Mucosa of descending colon (tissue), 3 donors: ENCODE measurements at regions of chr22 and their contacts with region 1.

Region 1: DNA sequence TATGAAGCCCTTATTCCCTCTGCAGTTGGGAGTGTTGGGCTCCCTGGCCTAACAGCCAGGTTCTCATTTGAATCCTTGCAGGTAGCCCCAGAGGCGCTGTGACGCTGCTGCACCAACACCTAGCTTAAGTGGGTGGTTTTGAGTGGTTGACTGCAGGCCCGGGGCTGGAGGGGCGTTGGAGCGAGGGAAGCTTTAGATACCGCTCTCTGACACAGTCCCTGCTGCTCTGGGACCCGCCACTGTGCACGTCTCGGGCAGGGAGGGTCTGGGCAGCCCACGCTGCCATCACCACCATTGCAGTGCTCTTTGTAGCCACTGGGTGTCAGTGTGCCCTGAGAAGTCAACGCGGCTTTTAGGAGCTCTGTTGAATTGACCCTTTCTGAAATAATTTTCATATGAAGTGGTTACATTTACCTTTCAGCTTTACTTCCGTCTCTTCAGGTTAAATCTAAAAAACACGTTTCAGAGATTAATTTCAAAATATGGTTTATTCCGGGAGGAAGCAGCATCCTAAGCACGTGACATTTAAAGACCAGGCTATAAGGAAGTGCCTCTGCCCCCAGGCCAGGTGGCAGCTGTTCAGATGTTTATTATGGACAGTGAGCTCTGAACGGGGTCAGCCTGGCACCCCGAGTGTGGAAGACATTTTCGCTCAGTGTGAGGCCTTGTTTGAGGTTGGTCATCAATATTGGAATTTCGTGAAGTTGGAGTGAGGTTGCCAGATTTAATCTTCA is 30.9 kb upstream of the PARVB start:
- DNase-seq: peak in 2 of 3 donors; percentile 61
- ATAC-seq: peak; percentile 81
- H3K4me3 ChIP-seq: no peak overlapping the region
- H3K4me1 ChIP-seq: no peaks in the 10 kb centered on the region
- CTCF ChIP-seq: peak; percentile 91

Region 2: GRCh38 chr22:44074337-44074984 is 81.3 kb after region 1 on chr22:
- intact Hi-C with region 1: loop called in 1 of 2 experiments (anchors 10 kb)
- DNase-seq: no peak
- ATAC-seq: no peak
- H3K4me3 ChIP-seq: no peak overlapping the region
- H3K4me1 ChIP-seq: no peaks in the 10 kb centered on the region
- CTCF ChIP-seq: no peak

Region 3: DNA sequence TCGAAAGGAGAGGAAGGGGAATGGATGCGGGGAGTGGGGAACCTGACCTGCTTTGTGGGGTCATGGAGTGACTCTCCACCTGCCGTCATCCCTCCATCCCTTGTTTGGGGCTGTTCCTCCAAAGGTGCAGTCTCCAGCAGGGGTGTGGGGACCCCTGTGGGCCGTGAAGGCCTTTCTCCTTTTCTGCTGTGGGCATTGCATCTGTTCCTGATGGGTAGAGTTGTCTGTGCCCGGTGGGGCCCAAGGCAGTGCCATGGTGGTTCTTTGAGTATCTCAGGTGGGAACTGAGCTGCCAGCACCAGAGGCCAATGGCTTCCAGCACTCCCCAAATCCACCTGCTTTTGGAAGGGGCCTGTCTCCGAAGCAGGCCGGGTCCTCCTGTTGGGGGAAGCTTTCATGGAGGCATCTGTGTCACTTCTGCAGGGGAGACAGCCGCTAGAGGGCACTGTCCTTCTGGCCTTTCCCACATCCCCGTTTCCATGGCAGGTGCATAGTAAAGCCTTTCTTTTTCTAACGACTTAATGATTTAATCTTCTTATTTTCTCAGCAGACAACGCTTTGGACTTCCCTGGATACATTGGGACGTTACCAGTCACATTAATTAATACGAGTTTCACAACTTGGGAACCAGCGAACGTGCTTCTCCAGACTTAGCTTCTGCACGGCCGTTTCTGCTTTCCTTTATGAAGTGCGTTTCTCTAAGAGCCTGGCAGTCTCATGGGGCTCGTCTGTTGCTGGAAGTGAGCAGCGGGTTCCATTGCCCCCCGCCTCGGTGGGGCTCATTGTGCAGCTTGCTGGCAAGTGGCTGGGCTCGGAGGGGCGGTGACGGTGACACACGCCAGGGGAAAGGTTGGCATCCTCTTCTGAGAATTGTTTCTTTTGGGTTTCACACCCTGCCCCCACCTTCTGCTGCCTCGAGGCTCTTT is 88.0 kb after region 1 on chr22:
- intact Hi-C with region 1: loop called (anchors 10 kb)
- DNase-seq: peak in 2 of 3 donors; percentile 71 to 92
- ATAC-seq: peak; percentile 61
- H3K4me3 ChIP-seq: no peak overlapping the region
- H3K4me1 ChIP-seq: no peaks in the 10 kb centered on the region
- CTCF ChIP-seq: peak; percentile 55

Region 4: DNA sequence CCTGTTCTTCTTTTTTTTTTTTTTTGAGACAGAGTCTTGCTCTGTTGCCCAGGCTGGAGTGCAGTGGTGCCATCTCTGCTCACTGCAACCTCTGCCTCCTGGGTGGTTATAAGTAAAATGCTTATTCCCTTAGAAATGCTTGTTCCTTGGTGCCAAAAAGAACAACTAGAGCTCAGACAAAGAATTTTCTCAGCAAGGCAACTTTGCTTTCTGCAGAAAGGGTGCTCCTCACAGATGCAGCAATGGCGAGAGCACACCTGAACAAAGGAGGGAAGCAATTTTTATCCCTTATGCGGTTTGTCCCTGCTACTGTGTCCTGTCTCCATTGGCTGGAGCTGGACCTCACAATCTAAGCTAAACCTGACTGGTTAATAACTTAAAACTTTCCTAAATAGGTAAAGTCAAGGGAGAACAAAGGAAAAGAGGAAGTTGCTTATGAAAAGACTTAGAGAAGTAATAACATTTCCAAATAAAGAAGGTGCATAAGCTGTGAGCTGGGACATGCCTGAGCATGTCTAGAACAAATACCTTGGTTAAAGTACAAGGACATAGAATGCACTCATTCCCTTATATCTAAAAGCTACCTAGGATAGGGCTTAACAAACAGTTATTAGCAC is 618.8 kb after region 1 on chr22:
- intact Hi-C with region 1: no loop called
- DNase-seq: no peak
- ATAC-seq: no peak
- H3K4me3 ChIP-seq: no peak overlapping the region
- H3K4me1 ChIP-seq: no peaks in the 10 kb centered on the region
- CTCF ChIP-seq: no peak

Region 5: GRCh38 chr22:44625981-44626687 is 632.9 kb after region 1 on chr22:
- intact Hi-C with region 1: loop called (anchors 5 to 10 kb)
- DNase-seq: peak; percentile 69 to 80 (median 74)
- ATAC-seq: peak; percentile 91
- H3K4me3 ChIP-seq: no peak overlapping the region
- H3K4me1 ChIP-seq: no peaks in the 10 kb centered on the region
- CTCF ChIP-seq: peak; percentile 87